ENCODE measurements at regions of chr15 and their contacts with region 1.

Region 1: GRCh38 chr15:40044717-40045571 is 6.0 kb upstream of the SRP14 start:
- DNase-seq: peak; percentile 93 to 96 (median 95)
- ATAC-seq: peak; percentile 90
- H3K4me3 ChIP-seq: no peak overlapping the region
- H3K4me1 ChIP-seq: peaks cover 38% of the 10 kb centered on the region
- CTCF ChIP-seq: peak; percentile 89

Region 2: GRCh38 chr15:40108855-40109735 is 64.2 kb after region 1 on chr15 and contains the start of gene BMF:
- intact Hi-C with region 1: loop called in 1 of 2 experiments (anchors 10 kb)
- DNase-seq: peak; percentile 100
- ATAC-seq: peak; percentile 84
- H3K4me3 ChIP-seq: peak within 1 kb of the TSS; percentile 61
- H3K4me1 ChIP-seq: peaks cover 38% of the 10 kb centered on the region
- CTCF ChIP-seq: no peak
- total RNA-seq, gene BMF: 12.6 to 32.1 (median 28.7) TPM

Region 3: GRCh38 chr15:40274350-40275274 is 229.7 kb after region 1 on chr15:
- intact Hi-C with region 1: loop called in 1 of 2 experiments (anchors 5 kb)
- DNase-seq: peak; percentile 81 to 89 (median 89)
- ATAC-seq: peak; percentile 88
- H3K4me3 ChIP-seq: no peak overlapping the region
- H3K4me1 ChIP-seq: peaks cover 2% of the 10 kb centered on the region
- CTCF ChIP-seq: peak; percentile 99